Sciatic nerve (tissue), 2 donors: ENCODE measurements at regions of chr9 and their contacts with region 1.

Region 1: DNA sequence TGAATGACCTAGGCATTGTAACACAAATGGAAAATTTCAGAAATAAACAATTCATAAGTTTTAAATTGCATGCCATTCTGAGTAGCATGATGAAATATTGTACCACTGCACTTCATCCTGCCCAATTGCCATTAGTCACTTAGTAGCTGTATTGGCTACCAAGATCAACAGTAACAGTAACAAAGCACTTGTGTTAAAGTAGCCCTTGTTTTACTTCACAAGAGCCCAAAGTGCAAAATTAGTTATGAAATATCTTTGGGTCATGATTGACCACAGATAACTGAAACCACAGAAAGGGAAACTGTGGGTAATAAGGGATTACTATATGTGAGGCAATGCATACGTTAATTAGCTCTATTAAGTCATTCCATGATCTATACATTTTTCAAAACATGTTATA is 33.3 kb upstream of the RORB start:
- DNase-seq: no peak
- ATAC-seq: no peak

Region 2: GRCh38 chr9:74517188-74517587 is 53.4 kb after region 1 on chr9:
- intact Hi-C with region 1: loop called (anchors 2 kb)
- DNase-seq: no peak
- ATAC-seq: no peak

Region 3: GRCh38 chr9:74534841-74535240 is 71.0 kb after region 1 on chr9:
- intact Hi-C with region 1: no loop called
- DNase-seq: no peak
- ATAC-seq: no peak